Heart right ventricle (tissue), 16 donors: ENCODE measurements at regions of chr11 and their contacts with region 1.

Region 1: GRCh38 chr11:122020902-122021301 is 95.1 kb downstream of the BLID start:
- DNase-seq: no peak
- ATAC-seq: no peak
- H3K4me3 ChIP-seq: no peak overlapping the region
- H3K27ac ChIP-seq: no peak overlapping the region
- H3K4me1 ChIP-seq: no peaks in the 10 kb centered on the region
- H3K27me3 ChIP-seq: no peaks in the 10 kb centered on the region
- CTCF ChIP-seq: peak in 8 of 9 donors; percentile 25 to 63 (median 57)

Region 2: DNA sequence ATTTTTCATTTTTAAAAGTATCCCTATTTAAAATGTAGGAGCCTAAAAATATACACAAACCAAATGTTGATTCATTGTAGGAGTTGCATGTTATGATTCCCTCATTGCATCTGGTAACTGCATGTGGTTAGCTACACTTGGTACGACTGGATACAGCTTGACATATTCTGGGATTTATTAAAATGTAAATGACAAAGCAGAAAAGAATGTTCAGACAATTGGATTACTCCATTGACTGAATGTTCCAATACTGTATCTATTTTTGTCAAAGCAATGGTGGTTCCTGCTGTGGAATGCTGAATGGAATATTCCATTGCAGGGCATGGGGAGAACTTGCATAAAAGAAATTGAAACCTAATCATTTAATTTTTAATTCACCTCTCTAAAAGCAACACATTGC is 64.4 kb after region 1 on chr11:
- intact Hi-C with region 1: loop called in 2 of 10 experiments (anchors 5 to 10 kb)
- DNase-seq: no peak
- ATAC-seq: peak in 7 of 8 donors; percentile 67 to 95 (median 87)
- H3K4me3 ChIP-seq: no peak overlapping the region
- H3K27ac ChIP-seq: peak overlapping the region in 8 of 10 donors; percentile 11 to 80 (median 55)
- H3K4me1 ChIP-seq: peaks cover 0 to 41% (median 11%) of the 10 kb centered on the region in 9 donors
- H3K27me3 ChIP-seq: no peaks in the 10 kb centered on the region
- CTCF ChIP-seq: no peak

Region 3: DNA sequence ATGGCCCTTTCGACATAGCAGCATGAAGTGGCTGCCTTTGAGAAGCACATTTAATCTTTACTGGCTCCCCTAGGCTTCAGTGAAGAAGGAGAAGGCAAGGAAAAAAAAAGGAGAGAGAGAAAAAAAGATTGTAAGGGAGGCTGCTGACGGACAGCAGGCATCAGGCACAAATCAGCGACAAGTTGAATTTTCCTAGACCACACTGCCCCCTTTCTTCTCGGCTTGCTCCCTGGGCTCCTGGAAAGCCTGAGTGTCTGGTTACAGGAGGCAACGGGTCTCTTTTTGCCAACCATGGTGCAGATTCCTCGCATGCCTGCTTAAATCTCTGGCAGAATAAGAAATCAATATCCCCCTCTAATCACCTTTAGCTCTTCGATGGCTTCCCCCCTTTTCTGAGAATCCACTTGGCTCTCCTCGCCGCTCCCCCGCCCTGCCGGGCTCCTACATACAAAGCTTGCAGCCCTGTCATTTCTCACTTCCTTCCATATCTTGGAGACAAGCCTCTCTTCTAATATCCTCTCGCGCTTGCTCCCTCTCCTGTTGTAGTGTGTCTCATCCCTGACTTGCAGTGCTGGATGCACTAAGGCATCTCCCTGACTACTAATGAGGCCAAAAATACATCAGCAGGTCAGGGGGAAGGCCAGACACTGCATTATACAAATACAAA is 80.9 kb after region 1 on chr11:
- intact Hi-C with region 1: loop called in 5 of 10 experiments (anchors 5 to 10 kb)
- DNase-seq: peak; percentile 44 to 80
- ATAC-seq: peak; percentile 85 to 92 (median 88)
- H3K4me3 ChIP-seq: peak overlapping the region; percentile 25 to 68 (median 56)
- H3K27ac ChIP-seq: peak overlapping the region; percentile 77 to 96 (median 90)
- H3K4me1 ChIP-seq: peaks cover 0 to 19% (median 11%) of the 10 kb centered on the region in 9 donors
- H3K27me3 ChIP-seq: peaks cover 0 to 58% (median 25%) of the 10 kb centered on the region in 7 donors
- CTCF ChIP-seq: peak; percentile 20 to 82 (median 56)

Region 4: GRCh38 chr11:122108192-122108799 is 87.4 kb after region 1 on chr11:
- intact Hi-C with region 1: loop called in 4 of 10 experiments (anchors 5 to 10 kb)
- DNase-seq: no peak
- ATAC-seq: no peak
- H3K4me3 ChIP-seq: no peak overlapping the region
- H3K27ac ChIP-seq: peak overlapping the region in 9 of 10 donors; percentile 12 to 70 (median 61)
- H3K4me1 ChIP-seq: peaks cover 0 to 30% (median 10%) of the 10 kb centered on the region in 9 donors
- H3K27me3 ChIP-seq: no peaks in the 10 kb centered on the region
- CTCF ChIP-seq: peak; percentile 20 to 57 (median 50)

Region 5: DNA sequence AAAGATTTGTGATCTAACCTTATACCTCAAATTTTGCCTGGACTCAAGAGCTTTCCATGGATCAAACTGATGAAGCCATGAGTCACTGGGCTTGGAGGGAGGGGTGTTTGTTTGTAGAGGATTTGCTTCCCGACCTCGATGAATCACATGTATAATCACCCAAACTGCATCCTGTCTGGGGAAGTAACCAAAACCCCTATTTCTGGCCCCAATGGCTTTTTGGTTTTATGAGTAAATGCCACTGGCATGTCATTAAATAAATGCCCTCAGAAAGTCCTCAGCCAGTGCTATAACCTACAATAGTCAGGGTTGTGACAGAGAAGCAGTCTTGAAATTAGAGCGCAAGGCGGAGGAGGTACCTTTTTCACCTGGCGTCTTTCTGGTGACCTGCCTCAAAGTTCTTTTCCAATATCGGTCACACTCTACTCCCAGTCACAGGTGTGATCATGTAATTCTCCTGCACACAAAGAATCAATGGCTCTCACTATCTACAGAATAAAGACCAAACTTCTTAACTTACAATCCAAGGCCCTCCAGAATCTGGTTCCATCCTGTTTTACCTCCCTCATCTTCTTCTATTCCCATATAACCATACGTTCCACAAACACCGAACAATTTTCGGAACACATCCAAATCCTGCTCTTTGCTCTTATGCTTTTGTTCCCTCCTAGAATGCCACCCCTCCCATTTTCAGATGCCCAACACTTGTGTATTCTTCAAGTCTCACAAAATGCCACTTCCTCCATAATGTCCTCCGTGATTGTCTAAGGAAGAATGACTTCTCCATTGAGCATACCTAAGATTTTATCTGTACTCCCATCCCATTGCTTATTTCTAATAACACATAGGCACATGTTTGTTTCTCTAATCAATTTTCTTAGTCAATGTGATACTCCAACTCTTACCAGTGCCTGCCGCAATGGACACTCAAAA is 176.4 kb after region 1 on chr11:
- intact Hi-C with region 1: loop called in 7 of 10 experiments (anchors 5 to 10 kb)
- DNase-seq: peak in 1 of 2 donors; percentile 20
- ATAC-seq: peak in 3 of 8 donors; percentile 46 to 87 (median 61)
- H3K4me3 ChIP-seq: no peak overlapping the region
- H3K27ac ChIP-seq: peak overlapping the region in 2 of 10 donors; percentile 13 to 43
- H3K4me1 ChIP-seq: peaks cover 0 to 45% (median 13%) of the 10 kb centered on the region in 9 donors
- H3K27me3 ChIP-seq: no peaks in the 10 kb centered on the region
- CTCF ChIP-seq: no peak

Region 6: DNA sequence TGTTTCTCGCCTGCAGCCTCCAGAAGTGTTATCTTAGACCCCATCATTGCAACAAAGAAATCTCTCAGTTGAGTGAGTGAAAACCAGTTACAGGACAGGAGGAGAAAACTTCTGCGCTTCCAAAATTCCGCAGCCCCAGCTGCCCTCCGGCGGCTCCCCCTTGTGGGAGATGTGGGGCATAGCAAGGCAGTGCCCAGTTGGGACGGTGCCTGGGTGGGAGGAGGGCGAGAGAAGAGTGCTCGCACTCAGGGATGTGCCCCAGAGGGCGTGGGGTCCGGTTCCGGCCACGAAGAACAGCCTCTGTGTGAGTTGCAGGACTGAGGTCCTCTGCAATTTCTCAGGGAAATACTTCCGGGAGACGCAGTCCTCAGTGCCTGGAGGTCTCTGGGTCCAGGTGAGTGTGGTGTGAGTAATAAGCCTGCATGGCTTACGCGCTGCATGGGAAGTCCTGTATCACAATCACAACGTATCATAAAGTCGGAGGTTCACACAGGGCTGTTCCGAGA is 182.1 kb after region 1 on chr11:
- intact Hi-C with region 1: loop called in 7 of 10 experiments (anchors 5 to 10 kb)
- DNase-seq: peak; percentile 66 to 76
- ATAC-seq: peak; percentile 84 to 91 (median 88)
- H3K4me3 ChIP-seq: peak overlapping the region in 8 of 10 donors; percentile 24 to 47 (median 46)
- H3K27ac ChIP-seq: peak overlapping the region in 8 of 10 donors; percentile 2 to 67 (median 46)
- H3K4me1 ChIP-seq: peaks cover 0 to 56% (median 29%) of the 10 kb centered on the region in 9 donors
- H3K27me3 ChIP-seq: no peaks in the 10 kb centered on the region
- CTCF ChIP-seq: peak; percentile 89 to 99 (median 98)

Region 7: GRCh38 chr11:122505304-122506006 is 484.6 kb after region 1 on chr11:
- intact Hi-C with region 1: loop called in 2 of 10 experiments (anchors 5 to 10 kb)
- DNase-seq: peak; percentile 74 to 83
- ATAC-seq: peak; percentile 96 to 100 (median 97)
- H3K4me3 ChIP-seq: no peak overlapping the region
- H3K27ac ChIP-seq: no peak overlapping the region
- H3K4me1 ChIP-seq: peaks cover 0 to 8% (median 5%) of the 10 kb centered on the region in 9 donors
- H3K27me3 ChIP-seq: peaks cover 0 to 7% (median 0%) of the 10 kb centered on the region in 7 donors
- CTCF ChIP-seq: peak; percentile 64 to 95 (median 85)